ENCODE measurements at regions of chr17 and their contacts with region 1.

Region 1: DNA sequence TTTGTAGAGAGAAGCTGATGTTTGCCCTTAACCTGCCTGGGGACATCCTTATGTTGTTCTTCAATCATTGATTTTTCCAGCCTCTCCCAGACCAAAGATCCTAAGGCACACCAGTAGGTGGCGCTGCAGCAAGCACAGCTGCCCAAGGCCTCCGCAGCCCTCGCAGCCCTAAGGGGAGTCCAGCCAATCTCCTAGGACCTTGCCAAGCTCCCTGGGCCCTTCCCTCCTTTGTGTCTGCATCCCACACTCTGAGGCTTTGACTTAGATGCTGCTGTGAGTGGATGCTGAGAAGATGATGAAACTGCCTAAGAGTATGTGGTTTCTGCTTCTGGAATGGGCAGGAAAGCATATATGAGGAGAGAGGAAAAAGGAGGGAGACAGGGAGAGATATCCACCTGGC is 47.1 kb downstream of the SPACA3 start:
- DNase-seq: peak; percentile 21
- H3K4me3 ChIP-seq: no peak overlapping the region
- H3K27ac ChIP-seq: no peak overlapping the region
- H3K4me1 ChIP-seq: no peaks in the 10 kb centered on the region
- H3K27me3 ChIP-seq: no peaks in the 10 kb centered on the region
- CTCF ChIP-seq: peak; percentile 53 to 60
- POLR2A ChIP-seq: no peak

Region 2: GRCh38 chr17:32976131-32976530 is 62.6 kb before region 1 on chr17:
- CTCF ChIA-PET with region 1: no interaction called
- POLR2A ChIA-PET with region 1: no interaction called
- dilution Hi-C with region 1: no loop called
- intact Hi-C with region 1: no loop called
- DNase-seq: no peak
- H3K4me3 ChIP-seq: no peak overlapping the region
- H3K27ac ChIP-seq: no peak overlapping the region
- H3K4me1 ChIP-seq: no peaks in the 10 kb centered on the region
- H3K27me3 ChIP-seq: no peaks in the 10 kb centered on the region
- CTCF ChIP-seq: no peak
- POLR2A ChIP-seq: no peak

Region 3: DNA sequence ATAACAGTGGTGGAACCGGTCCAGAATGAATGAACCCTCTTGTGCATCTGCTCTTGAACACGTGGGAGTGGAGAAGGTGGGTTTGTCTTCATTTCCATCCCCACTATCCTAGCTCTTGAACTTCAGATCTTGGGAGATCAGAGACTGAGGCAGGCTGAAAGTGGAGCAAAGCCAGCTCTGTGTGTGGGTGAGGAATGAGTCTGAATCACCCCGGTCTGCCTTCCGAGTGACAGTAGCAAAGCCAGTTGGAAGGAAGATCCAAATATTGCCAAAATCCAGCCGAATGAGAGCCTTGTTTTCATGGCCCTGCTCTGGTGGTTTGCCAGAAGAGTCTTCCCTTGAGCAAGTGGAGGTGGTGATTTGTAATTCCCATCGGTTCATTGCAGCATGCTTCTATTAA is 283.3 kb after region 1 on chr17:
- CTCF ChIA-PET with region 1: no interaction called
- POLR2A ChIA-PET with region 1: no interaction called
- dilution Hi-C with region 1: no loop called
- intact Hi-C with region 1: no loop called
- DNase-seq: no peak
- H3K4me3 ChIP-seq: no peak overlapping the region
- H3K27ac ChIP-seq: no peak overlapping the region
- H3K4me1 ChIP-seq: no peaks in the 10 kb centered on the region
- H3K27me3 ChIP-seq: no peaks in the 10 kb centered on the region
- CTCF ChIP-seq: no peak
- POLR2A ChIP-seq: no peak

Region 4: DNA sequence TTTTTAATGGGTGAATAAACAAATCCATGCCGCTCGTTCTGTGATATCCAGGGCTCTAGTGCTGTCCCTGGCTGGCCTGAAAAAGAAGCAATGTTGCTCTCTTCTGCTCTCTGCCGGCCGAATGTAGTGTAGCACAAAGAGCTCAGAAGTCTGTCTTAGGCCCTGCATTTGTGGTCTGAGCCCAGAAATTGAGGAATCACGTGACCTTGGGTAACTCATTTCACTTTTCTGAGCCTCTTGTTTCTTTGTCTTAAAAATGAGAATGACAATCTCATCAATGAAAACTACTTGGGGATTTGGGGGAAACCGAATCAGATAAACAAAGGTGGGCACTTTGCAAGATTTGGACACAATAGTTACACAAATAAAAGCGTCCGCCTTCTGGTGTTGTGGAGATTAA is 635.9 kb after region 1 on chr17:
- CTCF ChIA-PET with region 1: interaction called, 25 read pairs
- POLR2A ChIA-PET with region 1: no interaction called
- dilution Hi-C with region 1: no loop called
- intact Hi-C with region 1: loop called (anchors 2 kb)
- DNase-seq: peak; percentile 67
- H3K4me3 ChIP-seq: no peak overlapping the region
- H3K27ac ChIP-seq: no peak overlapping the region
- H3K4me1 ChIP-seq: no peaks in the 10 kb centered on the region
- H3K27me3 ChIP-seq: no peaks in the 10 kb centered on the region
- CTCF ChIP-seq: peak; percentile 60 to 78
- POLR2A ChIP-seq: no peak